Heart right ventricle (tissue), 16 donors: ENCODE measurements at regions of chr15 and their contacts with region 1.

Region 1: GRCh38 chr15:68812597-68813548 is 7.8 kb downstream of the ANP32A start:
- DNase-seq: no peak
- ATAC-seq: peak in 1 of 8 donors; percentile 36
- H3K4me3 ChIP-seq: no peak overlapping the region
- H3K27ac ChIP-seq: peak overlapping the region in 9 of 10 donors; percentile 29 to 100 (median 60)
- H3K4me1 ChIP-seq: peaks cover 33 to 94% (median 91%) of the 10 kb centered on the region in 9 donors
- H3K27me3 ChIP-seq: no peaks in the 10 kb centered on the region
- CTCF ChIP-seq: no peak

Region 2: DNA sequence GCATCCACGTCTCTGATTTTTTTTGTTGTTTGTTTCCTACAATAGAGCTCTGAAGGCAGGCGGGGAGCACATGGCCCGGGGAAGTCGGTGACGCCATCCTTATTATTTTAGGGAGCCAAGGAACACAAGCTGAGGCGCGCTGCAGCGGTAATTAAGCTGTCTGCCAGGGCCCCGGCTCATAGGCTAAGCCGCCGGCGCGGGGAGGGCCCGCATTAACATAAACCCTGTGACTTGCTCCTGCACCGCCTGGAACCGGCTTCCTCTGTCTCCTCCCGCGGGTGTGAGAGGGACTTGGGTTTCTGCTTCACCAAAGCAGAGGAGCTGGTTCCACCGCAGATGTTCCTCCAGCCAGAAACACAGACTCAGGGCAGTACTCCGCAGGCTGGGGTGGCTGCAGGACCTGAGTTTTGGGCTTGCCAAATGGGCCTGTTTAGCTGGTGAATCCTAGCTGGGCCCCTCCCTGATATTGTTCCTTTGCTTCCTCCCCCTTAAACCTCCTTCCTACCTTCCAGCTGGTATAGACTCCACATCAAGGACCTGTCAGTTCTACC is 17.5 kb before region 1 on chr15:
- intact Hi-C with region 1: loop called in 4 of 10 experiments (anchors 2 kb)
- DNase-seq: peak; percentile 87 to 93
- ATAC-seq: peak; percentile 92 to 97 (median 95)
- H3K4me3 ChIP-seq: peak overlapping the region in 7 of 10 donors; percentile 9 to 22 (median 18)
- H3K27ac ChIP-seq: peak overlapping the region; percentile 65 to 91 (median 78)
- H3K4me1 ChIP-seq: peaks cover 50 to 100% (median 97%) of the 10 kb centered on the region in 9 donors
- H3K27me3 ChIP-seq: no peaks in the 10 kb centered on the region
- CTCF ChIP-seq: no peak

Region 3: GRCh38 chr15:68885070-68885469 is 72.2 kb after region 1 on chr15:
- intact Hi-C with region 1: no loop called
- DNase-seq: no peak
- ATAC-seq: peak in 1 of 8 donors; percentile 18
- H3K4me3 ChIP-seq: no peak overlapping the region
- H3K27ac ChIP-seq: no peak overlapping the region
- H3K4me1 ChIP-seq: peaks cover 0 to 11% (median 0%) of the 10 kb centered on the region in 9 donors
- H3K27me3 ChIP-seq: peaks cover 0 to 9% (median 0%) of the 10 kb centered on the region in 7 donors
- CTCF ChIP-seq: no peak

Region 4: DNA sequence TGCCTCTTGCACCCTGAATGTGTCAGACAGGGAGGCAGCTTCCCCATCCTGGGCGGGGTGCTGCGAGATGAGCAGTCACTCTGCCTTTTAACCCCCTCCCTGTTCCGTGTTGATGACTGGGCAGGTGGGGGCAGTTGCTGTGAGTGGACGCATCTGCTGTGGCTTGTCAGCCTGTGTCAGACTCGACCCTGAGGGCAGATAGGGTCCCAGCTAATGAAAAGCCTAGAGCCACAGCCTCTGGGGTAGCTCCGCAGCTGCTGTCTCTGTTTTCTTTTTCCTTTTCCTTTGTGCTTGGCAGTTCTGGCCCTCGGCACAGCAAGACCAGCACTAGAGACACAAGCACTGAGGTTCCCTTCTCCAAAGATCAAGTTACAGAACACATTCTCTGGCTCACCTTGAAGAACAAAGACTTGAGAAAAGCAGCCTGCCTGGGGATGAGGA is 304.6 kb after region 1 on chr15:
- intact Hi-C with region 1: no loop called
- DNase-seq: no peak
- ATAC-seq: no peak
- H3K4me3 ChIP-seq: no peak overlapping the region
- H3K27ac ChIP-seq: no peak overlapping the region
- H3K4me1 ChIP-seq: peaks cover 0 to 5% (median 0%) of the 10 kb centered on the region in 9 donors
- H3K27me3 ChIP-seq: peaks cover 0 to 17% (median 4%) of the 10 kb centered on the region in 7 donors
- CTCF ChIP-seq: no peak